ENCODE measurements at regions of chr3 and their contacts with region 1.

Region 1: DNA sequence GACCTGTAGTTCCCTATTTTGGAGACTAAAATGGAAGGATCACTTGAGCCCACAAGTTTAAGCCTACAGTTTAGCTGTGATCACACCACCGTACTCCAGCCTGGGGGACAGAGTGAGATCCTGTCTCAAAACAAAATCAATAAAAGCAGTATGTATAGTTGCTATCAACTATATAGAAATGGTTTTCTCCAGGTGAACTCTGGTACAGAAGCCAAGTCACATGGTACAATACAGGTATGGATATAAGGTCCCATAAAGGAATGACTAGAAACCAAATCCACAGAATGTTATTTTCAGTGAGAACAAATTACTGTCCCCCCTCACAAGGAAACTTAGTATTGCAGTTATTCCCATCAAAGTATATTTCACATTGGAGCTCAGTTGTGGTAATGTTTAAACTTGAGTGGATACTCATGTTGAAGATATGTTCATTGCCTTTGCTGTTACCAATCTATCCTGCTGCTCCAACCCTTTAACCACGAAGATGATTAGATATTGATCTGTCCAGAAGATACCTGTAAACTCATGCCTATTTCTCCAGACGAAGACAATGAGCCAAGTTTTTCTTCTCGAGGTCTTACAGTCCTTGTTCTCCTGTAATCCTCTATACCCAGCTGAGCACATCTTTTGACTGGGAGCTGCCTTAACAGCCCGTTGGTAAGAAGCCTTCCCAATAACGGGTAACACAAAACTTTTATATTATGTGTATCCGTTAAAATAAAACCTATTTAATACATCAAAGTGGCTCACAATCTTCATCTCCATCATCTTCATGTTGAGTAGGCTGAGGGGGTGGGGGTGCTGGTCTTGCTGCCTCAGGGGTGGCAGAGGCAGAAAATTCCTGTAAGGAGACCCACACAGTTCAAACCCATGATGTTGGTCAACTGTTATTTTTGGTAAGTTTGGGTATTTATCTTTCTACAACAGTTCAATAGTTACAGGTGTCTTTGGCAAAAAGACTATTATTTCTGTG is 24.6 kb downstream of the TRA2B start:
- DNase-seq: no peak
- H3K4me3 ChIP-seq: no peak overlapping the region
- H3K27ac ChIP-seq: no peak overlapping the region
- H3K4me1 ChIP-seq: no peaks in the 10 kb centered on the region
- H3K27me3 ChIP-seq: no peaks in the 10 kb centered on the region
- CTCF ChIP-seq: no peak
- EP300 ChIP-seq: no peak
- POLR2A ChIP-seq: peak; percentile 57 to 61
- RAD21 ChIP-seq: no peak

Region 2: GRCh38 chr3:185900226-185900625 is 13.0 kb before region 1 on chr3:
- CTCF ChIA-PET with region 1: interaction called, 7 read pairs
- POLR2A ChIA-PET with region 1: interaction called, 58 read pairs
- DNase-seq: no peak
- H3K4me3 ChIP-seq: no peak overlapping the region
- H3K27ac ChIP-seq: no peak overlapping the region
- H3K4me1 ChIP-seq: no peaks in the 10 kb centered on the region
- H3K27me3 ChIP-seq: no peaks in the 10 kb centered on the region
- CTCF ChIP-seq: no peak
- EP300 ChIP-seq: no peak
- POLR2A ChIP-seq: no peak
- RAD21 ChIP-seq: no peak

Region 3: DNA sequence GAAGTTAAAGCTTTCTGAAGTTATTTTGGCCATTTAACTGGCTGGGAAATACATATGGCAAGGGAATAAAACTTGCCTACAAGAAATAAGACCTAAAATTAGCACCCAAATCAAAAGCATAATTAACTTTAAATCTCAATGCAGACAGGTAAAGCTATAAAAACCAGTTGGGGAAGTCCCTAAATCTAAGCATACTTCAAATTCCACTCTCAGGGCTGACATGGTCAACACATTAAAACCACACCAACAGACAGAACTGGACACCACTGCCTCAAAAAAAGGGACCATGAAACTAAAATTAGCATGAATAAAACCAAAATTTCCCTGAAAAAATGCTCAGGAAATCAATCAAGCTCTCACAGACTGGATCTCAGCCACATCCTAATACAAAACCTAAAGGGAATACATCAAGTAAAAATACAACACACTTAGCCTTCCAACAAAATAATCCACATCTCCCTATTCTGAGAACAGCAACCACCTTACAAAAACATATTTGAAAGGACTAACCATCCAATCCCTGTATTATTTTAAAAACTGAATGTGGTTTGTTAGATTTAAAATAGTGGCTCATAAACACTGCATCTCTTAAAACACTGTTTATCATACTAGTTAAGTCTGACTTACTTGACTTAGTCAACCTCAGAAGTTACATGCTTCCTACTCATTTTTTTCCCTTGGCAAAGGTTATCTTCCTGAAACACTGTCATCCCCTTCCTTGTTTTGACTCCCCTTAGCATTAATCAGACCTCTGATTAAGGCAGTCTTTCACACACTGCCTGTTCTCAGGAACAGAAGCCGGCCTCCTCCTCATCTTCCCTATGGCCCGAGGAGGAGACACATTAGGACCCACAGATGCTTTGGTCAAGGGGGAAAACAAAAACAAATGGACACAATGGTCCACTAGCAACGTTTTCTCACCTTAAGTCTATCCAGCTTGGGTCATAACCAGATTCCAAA is 16.3 kb after region 1 on chr3:
- CTCF ChIA-PET with region 1: interaction called, 4 read pairs
- POLR2A ChIA-PET with region 1: interaction called, 176 read pairs
- DNase-seq: no peak
- H3K4me3 ChIP-seq: peak overlapping the region in 3 of 4 experiments; percentile 1 to 92 (median 11); a peak in 4 of 8 replicates
- H3K27ac ChIP-seq: no peak overlapping the region
- H3K4me1 ChIP-seq: peaks cover 0 to 20% (median 12%) of the 10 kb centered on the region in 4 experiments; a peak in 5 of 7 replicates
- H3K27me3 ChIP-seq: no peaks in the 10 kb centered on the region
- CTCF ChIP-seq: no peak
- EP300 ChIP-seq: no peak
- POLR2A ChIP-seq: peak; percentile 16 to 22
- RAD21 ChIP-seq: no peak

Region 4: GRCh38 chr3:185937689-185938463 is 24.7 kb after region 1 on chr3 and contains the start of gene TRA2B:
- CTCF ChIA-PET with region 1: interaction called, 7 read pairs
- POLR2A ChIA-PET with region 1: interaction called, 176 read pairs
- DNase-seq: peak; percentile 96 to 98
- H3K4me3 ChIP-seq: peak within 1 kb of the TSS; percentile 83 to 100 (median 96)
- H3K27ac ChIP-seq: peak within 1 kb of the TSS; percentile 100
- H3K4me1 ChIP-seq: peaks cover 0 to 4% (median 0%) of the 10 kb centered on the region in 4 experiments; a peak in 1 of 7 replicates
- H3K27me3 ChIP-seq: no peaks in the 10 kb centered on the region
- CTCF ChIP-seq: peak; percentile 5 to 41 (median 35); a peak in 2 of 4 replicates
- EP300 ChIP-seq: peak in 1 of 2 experiments; percentile 64; a peak in 1 of 3 replicates
- POLR2A ChIP-seq: peak; percentile 98 to 99
- RAD21 ChIP-seq: no peak
- total RNA-seq, gene TRA2B: 267 and 274 TPM in 2 replicates

Measured in H1 (cell line).